ENCODE measurements at regions of chr5 and their contacts with region 1.

Region 1: DNA sequence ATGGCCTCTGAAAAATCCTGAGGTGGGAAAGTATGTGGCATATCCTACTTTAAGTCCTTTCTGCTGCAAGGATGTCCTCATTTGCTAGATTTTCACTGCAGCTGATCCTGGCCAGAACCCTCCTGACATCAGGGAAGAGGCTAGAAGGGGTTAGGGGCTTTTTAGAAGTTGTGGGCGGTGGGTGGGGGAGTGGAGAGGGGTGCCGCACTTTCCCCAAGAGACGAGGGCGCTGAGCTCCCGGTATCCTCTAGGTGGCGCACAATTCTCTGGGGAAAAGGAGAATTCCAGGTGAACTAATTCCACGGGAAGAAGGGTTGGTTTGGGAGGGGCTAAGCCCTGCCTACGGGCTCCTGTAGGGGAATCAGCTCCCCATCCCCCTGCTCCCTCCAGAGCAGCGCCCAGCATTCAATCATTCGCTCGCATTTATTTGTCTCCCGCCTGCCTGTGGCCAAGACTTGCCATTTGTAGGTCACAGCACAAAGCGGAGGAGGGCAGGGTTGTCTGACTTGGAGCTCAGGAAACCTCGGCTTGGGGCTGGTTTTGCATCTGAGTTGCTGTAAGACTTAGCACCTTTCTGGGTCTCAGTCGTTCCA is 42.9 kb upstream of the HAND1 start:
- DNase-seq: no peak
- ATAC-seq: peak; percentile 59
- H3K4me3 ChIP-seq: peak overlapping the region in 1 of 2 experiments; percentile 7; a peak in 1 of 4 replicates
- H3K27ac ChIP-seq: no peak overlapping the region
- H3K4me1 ChIP-seq: peaks cover 17% of the 10 kb centered on the region
- H3K27me3 ChIP-seq: no peaks in the 10 kb centered on the region
- CTCF ChIP-seq: peak; percentile 96

Region 2: GRCh38 chr5:154179846-154180710 is 340.9 kb before region 1 on chr5:
- CTCF ChIA-PET with region 1: interaction called, 11 read pairs
- POLR2A ChIA-PET with region 1: no interaction called
- in situ Hi-C with region 1: no loop called
- intact Hi-C with region 1: no loop called
- DNase-seq: no peak
- ATAC-seq: peak; percentile 98
- H3K4me3 ChIP-seq: no peak overlapping the region
- H3K27ac ChIP-seq: no peak overlapping the region
- H3K4me1 ChIP-seq: no peaks in the 10 kb centered on the region
- H3K27me3 ChIP-seq: peaks cover 10% of the 10 kb centered on the region
- CTCF ChIP-seq: peak; percentile 87

Region 3: GRCh38 chr5:154503698-154504039 is 17.3 kb before region 1 on chr5:
- CTCF ChIA-PET with region 1: interaction called, 10 read pairs
- POLR2A ChIA-PET with region 1: no interaction called
- in situ Hi-C with region 1: no loop called
- intact Hi-C with region 1: no loop called
- DNase-seq: no peak
- ATAC-seq: no peak
- H3K4me3 ChIP-seq: no peak overlapping the region
- H3K27ac ChIP-seq: no peak overlapping the region
- H3K4me1 ChIP-seq: no peaks in the 10 kb centered on the region
- H3K27me3 ChIP-seq: no peaks in the 10 kb centered on the region
- CTCF ChIP-seq: no peak

Region 4: DNA sequence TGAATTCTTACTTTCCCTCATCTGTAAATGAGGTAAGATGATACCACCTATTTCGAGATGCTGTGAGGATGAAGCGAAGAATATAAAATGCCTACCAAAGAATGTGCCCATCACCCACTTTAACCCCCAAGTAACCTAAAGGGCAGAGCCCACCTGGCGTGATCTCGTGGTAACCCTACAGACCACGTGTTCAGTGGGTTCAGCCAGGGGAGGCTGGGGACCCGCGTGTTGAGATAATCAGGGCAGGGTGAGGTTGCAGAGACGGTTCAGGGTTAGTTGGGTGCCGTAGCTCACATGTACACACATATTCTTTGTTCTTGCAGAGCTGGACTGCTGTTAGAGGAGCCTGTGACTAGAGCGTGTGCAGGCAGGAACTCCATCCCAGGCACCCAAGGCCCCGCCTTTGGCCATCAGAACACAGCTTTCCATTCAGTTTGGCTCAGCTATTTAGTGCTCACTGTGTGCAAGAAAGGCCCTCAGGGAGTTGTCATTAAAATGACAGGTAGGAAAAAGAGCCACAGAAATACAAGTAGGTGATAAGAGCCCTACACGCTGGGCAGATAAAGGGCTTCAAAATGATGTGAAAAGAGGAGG is 13.6 kb after region 1 on chr5:
- CTCF ChIA-PET with region 1: interaction called, 10 read pairs
- POLR2A ChIA-PET with region 1: no interaction called
- in situ Hi-C with region 1: no loop called
- intact Hi-C with region 1: no loop called
- DNase-seq: no peak
- ATAC-seq: peak; percentile 34; the same call in 1 of the 2 replicates
- H3K4me3 ChIP-seq: no peak overlapping the region
- H3K27ac ChIP-seq: no peak overlapping the region
- H3K4me1 ChIP-seq: no peaks in the 10 kb centered on the region
- H3K27me3 ChIP-seq: no peaks in the 10 kb centered on the region
- CTCF ChIP-seq: no peak

Region 5: GRCh38 chr5:154610321-154611154 is 89.6 kb after region 1 on chr5:
- CTCF ChIA-PET with region 1: no interaction called
- POLR2A ChIA-PET with region 1: no interaction called
- in situ Hi-C with region 1: no loop called
- intact Hi-C with region 1: loop called (anchors 1 kb)
- DNase-seq: peak; percentile 57
- ATAC-seq: peak; percentile 97
- H3K4me3 ChIP-seq: peak overlapping the region; percentile 27 to 49
- H3K27ac ChIP-seq: no peak overlapping the region
- H3K4me1 ChIP-seq: peaks cover 7% of the 10 kb centered on the region
- H3K27me3 ChIP-seq: peaks cover 21% of the 10 kb centered on the region
- CTCF ChIP-seq: peak; percentile 98

Region 6: DNA sequence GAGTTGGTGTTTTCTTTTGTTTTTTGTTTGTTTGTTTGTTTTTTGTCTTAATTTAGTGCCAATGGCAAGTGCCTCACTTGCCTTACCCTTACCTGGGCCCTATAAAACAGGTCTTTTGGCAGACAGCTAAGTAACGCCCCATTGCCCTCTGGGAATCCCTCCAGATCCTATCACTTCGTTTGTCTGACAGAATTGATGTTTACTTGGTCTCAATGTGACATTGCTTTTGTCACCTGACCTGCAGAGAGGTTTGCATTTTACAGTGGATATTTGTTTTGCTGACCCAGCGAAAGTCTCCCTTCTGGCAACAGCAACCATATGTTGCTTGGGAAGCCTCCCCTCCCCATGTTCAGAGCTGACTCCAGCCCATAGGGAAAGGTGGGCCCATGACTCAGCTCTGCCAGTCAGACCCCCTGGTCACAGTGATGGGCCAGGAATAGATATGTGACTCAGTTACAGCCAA is 180.2 kb after region 1 on chr5:
- CTCF ChIA-PET with region 1: interaction called, 12 read pairs
- POLR2A ChIA-PET with region 1: no interaction called
- in situ Hi-C with region 1: no loop called
- intact Hi-C with region 1: no loop called
- DNase-seq: no peak
- ATAC-seq: no peak
- H3K4me3 ChIP-seq: no peak overlapping the region
- H3K27ac ChIP-seq: no peak overlapping the region
- H3K4me1 ChIP-seq: peaks cover 11% of the 10 kb centered on the region
- H3K27me3 ChIP-seq: no peaks in the 10 kb centered on the region
- CTCF ChIP-seq: no peak